Right cardiac atrium (tissue), 5 donors: ENCODE measurements at regions of chr5 and their contacts with region 1.

Region 1: DNA sequence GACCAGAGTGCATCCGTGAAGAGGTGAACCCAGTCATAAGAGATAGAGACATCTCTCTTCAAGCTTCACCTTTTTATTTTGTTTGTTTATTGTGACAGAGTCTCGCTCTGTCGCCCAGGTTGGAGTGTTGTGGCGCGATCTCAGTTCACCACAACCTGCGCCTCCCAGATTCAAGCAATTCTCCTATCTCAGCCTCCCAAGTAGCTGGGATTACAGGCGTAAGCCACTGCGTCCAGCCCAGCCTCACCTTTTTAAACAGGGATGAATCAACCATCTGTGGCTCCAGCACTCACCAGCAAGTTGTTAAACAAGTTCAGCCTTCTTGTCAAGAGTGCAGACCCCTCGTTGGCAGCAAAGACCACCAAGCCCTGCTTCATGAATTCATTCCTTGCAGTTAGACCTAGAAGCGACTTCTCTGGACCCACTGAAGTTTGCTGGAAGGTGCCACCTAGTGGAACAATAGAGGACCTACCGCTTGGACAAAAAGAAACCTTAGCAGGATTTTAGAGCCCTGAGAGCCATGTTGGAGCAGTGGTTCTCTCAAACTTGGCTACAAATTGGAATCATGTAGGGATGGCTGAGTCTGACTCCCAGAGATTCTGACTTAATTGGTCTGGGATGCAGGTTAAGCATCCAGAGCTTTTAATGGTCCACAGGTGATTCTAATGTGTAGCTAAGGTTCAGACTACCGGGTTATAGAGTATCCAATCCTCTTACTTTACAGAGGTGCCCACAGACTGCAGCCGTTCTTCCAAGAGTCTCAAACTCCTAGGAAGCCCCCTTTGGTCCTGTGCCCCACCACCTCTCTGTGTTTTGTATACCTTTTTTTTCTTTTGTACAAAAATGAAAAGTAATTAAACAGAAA is 10.5 kb upstream of the GALNT10 start:
- DNase-seq: no peak
- ATAC-seq: peak; percentile 74 to 79
- H3K4me3 ChIP-seq: no peak overlapping the region
- H3K27ac ChIP-seq: no peak overlapping the region
- H3K4me1 ChIP-seq: no peaks in the 10 kb centered on the region
- H3K27me3 ChIP-seq: no peaks in the 10 kb centered on the region

Region 2: GRCh38 chr5:153974131-153974812 is 205.8 kb before region 1 on chr5:
- intact Hi-C with region 1: loop called in 3 of 4 experiments (anchors 5 to 10 kb)
- DNase-seq: peak in 1 of 3 donors; percentile 47
- ATAC-seq: peak; percentile 10 to 49
- H3K4me3 ChIP-seq: no peak overlapping the region
- H3K27ac ChIP-seq: no peak overlapping the region
- H3K4me1 ChIP-seq: no peaks in the 10 kb centered on the region
- H3K27me3 ChIP-seq: no peaks in the 10 kb centered on the region

Region 3: GRCh38 chr5:154072414-154073171 is 107.5 kb before region 1 on chr5:
- intact Hi-C with region 1: loop called (anchors 2 to 5 kb)
- DNase-seq: peak; percentile 80 to 93 (median 92)
- ATAC-seq: peak; percentile 91 to 93
- H3K4me3 ChIP-seq: no peak overlapping the region
- H3K27ac ChIP-seq: no peak overlapping the region
- H3K4me1 ChIP-seq: no peaks in the 10 kb centered on the region
- H3K27me3 ChIP-seq: no peaks in the 10 kb centered on the region